ENCODE measurements at regions of chr13 and their contacts with region 1.

Region 1: DNA sequence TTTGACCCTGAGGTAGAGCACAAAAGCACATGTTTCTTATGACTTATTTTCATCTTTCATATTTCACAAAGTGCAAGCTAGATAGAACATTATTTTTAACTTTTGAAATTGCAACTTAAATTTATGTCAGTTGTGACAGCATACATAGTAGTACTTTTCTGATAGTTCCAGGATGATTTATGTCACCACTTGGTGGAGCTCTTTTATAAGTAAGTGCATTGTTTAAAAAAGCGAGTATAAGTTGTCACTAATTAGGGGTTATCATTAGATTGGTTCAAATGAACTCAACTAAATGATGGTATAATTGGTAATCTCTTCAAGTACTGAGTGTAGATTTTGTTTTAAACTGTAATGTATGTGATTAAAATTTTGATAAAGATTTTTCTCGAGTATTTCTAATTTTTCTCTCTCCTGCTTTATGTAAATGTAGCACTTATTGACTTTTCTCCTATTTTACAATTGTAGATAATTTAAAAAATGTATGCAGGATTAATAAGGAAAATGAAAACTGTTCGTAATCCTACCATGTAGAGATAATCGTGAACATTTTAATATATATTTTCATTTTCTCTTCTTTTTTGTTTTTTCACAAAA is 31.1 kb downstream of the RB1 start:
- DNase-seq: no peak
- ATAC-seq: no peak
- H3K4me3 ChIP-seq: no peak overlapping the region
- H3K27ac ChIP-seq: no peak overlapping the region
- H3K4me1 ChIP-seq: no peaks in the 10 kb centered on the region
- H3K27me3 ChIP-seq: no peaks in the 10 kb centered on the region

Region 2: GRCh38 chr13:48769107-48769704 is 434.6 kb after region 1 on chr13:
- intact Hi-C with region 1: loop called in 1 of 2 experiments (anchors 10 kb)
- DNase-seq: peak in 1 of 2 donors; percentile 76
- ATAC-seq: peak; percentile 97
- H3K4me3 ChIP-seq: no peak overlapping the region
- H3K27ac ChIP-seq: no peak overlapping the region
- H3K4me1 ChIP-seq: no peaks in the 10 kb centered on the region
- H3K27me3 ChIP-seq: no peaks in the 10 kb centered on the region

Measured in aorta (tissue), 5 donors.